ENCODE measurements at regions of chr4 and their contacts with region 1.

Region 1: GRCh38 chr4:99563310-99564186 is at the start of gene TRMT10A:
- DNase-seq: peak; percentile 97
- H3K4me3 ChIP-seq: peak within 1 kb of the TSS; percentile 50 to 66 (median 56)
- H3K27ac ChIP-seq: peak within 1 kb of the TSS; percentile 92 to 98 (median 94)
- H3K4me1 ChIP-seq: peaks cover 0 to 14% (median 4%) of the 10 kb centered on the region in 4 donors
- H3K27me3 ChIP-seq: no peaks in the 10 kb centered on the region
- CTCF ChIP-seq: peak in 3 of 5 experiments; percentile 15 to 48 (median 35)
- EP300 ChIP-seq: no peak
- POLR2A ChIP-seq: peak; percentile 85
- total RNA-seq, gene TRMT10A: 6.0 to 8.1 (median 6.8) TPM in 3 of 4 donors, not detected in the other

Region 2: GRCh38 chr4:99324979-99325378 is 238.6 kb before region 1 on chr4:
- in situ Hi-C with region 1: no loop called
- intact Hi-C with region 1: loop called (anchors 10 kb)
- DNase-seq: peak; percentile 51
- H3K4me3 ChIP-seq: no peak overlapping the region
- H3K27ac ChIP-seq: peak overlapping the region; percentile 64 to 82 (median 74)
- H3K4me1 ChIP-seq: peaks cover 3 to 8% (median 4%) of the 10 kb centered on the region in 4 donors
- H3K27me3 ChIP-seq: no peaks in the 10 kb centered on the region
- CTCF ChIP-seq: no peak
- EP300 ChIP-seq: peak; percentile 56
- POLR2A ChIP-seq: no peak

Region 3: DNA sequence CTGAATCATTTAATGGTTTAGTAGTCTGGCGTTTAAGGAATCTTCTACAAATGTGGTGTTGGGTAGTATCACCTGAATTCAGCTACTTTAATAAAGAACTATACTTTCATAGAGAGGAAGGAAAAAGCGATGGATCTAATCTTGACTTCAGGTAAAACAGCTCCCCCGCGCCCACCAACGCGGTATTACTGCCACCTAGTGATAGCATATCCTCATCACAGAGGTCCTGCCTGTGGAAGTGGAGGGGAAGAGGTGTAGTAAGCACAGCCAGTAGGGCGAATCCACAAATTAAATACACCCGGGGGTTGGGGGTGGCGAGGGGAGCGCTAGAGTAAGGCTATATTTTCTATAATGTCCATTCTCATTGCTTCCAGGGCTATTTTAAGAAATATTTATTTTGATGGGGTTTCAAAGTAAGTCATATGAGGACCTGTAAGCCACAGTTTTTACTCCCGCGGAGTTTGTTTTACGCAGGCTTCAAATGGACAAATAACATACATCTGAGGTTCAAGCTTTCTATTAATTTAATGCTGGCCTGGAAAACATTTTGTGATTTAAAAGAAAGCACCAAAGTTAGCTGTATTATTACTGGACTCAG is 244.8 kb after region 1 on chr4:
- in situ Hi-C with region 1: loop called in 3 of 4 experiments (anchors 5 to 10 kb)
- intact Hi-C with region 1: loop called (anchors 5 kb)
- DNase-seq: peak; percentile 74
- H3K4me3 ChIP-seq: no peak overlapping the region
- H3K27ac ChIP-seq: no peak overlapping the region
- H3K4me1 ChIP-seq: no peaks in the 10 kb centered on the region
- H3K27me3 ChIP-seq: no peaks in the 10 kb centered on the region
- CTCF ChIP-seq: peak; percentile 59 to 68 (median 62)
- EP300 ChIP-seq: no peak
- POLR2A ChIP-seq: no peak

Region 4: DNA sequence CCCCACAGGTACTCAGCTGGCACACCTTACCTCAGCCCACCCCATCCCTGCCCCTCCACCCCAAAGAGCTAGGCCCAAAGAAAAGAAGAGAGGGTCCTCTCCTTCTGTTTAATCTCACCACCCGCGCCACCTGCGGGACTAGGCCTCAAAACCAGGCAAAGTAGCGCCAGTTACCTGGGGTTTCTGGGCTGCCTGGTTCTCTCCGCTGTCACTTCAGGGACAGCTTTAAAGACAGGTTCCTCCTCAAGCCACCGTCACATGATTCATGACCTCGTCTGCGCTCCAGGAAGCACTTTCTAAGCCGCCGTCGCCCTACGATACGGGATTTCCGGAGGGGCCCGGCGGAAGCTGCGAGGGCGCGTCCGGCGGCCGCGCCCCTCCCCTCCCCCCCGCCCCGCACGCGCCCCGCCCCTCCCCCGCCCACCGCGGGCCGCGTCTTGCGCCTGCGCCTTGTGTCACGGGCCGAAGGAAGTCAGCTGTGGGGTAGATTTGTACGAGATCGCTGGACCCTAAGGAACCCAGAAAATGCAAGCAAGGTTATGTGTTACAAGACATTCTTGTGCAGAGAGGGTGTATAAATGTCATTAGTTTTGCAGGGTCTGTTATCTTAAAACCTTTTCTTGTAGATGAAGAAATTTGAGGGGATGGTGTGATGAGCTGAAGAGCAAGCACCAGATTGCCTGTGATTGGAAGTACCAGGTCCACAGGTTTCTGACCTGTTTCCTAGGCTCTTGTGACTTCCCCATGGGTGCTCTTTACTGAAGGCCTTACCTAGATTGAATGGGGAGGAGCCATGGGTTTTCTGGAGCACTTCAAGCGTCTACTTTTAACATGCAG is 330.8 kb after region 1 on chr4 and contains the start of gene LAMTOR3:
- in situ Hi-C with region 1: loop called in 3 of 4 experiments (anchors 10 to 25 kb)
- intact Hi-C with region 1: loop called (anchors 10 kb)
- DNase-seq: peak; percentile 94
- H3K4me3 ChIP-seq: peak within 1 kb of the TSS; percentile 57 to 81 (median 76)
- H3K27ac ChIP-seq: peak within 1 kb of the TSS; percentile 86 to 90 (median 89)
- H3K4me1 ChIP-seq: peaks cover 9 to 34% (median 11%) of the 10 kb centered on the region in 4 donors
- H3K27me3 ChIP-seq: no peaks in the 10 kb centered on the region
- CTCF ChIP-seq: no peak
- EP300 ChIP-seq: no peak
- POLR2A ChIP-seq: peak; percentile 76
- total RNA-seq, gene LAMTOR3: 1.00 to 60.3 (median 32.0) TPM

Measured in transverse colon (tissue), 4 donors.